Posterior vena cava (tissue), 2 donors: ENCODE measurements at regions of chr9 and their contacts with region 1.

Region 1: GRCh38 chr9:33721674-33722358 is 73.5 kb upstream of the PRSS3 start:
- DNase-seq: peak; percentile 96

Region 2: GRCh38 chr9:33623658-33624586 is 97.9 kb before region 1 on chr9:
- intact Hi-C with region 1: loop called (anchors 5 kb)
- DNase-seq: no peak

Region 3: DNA sequence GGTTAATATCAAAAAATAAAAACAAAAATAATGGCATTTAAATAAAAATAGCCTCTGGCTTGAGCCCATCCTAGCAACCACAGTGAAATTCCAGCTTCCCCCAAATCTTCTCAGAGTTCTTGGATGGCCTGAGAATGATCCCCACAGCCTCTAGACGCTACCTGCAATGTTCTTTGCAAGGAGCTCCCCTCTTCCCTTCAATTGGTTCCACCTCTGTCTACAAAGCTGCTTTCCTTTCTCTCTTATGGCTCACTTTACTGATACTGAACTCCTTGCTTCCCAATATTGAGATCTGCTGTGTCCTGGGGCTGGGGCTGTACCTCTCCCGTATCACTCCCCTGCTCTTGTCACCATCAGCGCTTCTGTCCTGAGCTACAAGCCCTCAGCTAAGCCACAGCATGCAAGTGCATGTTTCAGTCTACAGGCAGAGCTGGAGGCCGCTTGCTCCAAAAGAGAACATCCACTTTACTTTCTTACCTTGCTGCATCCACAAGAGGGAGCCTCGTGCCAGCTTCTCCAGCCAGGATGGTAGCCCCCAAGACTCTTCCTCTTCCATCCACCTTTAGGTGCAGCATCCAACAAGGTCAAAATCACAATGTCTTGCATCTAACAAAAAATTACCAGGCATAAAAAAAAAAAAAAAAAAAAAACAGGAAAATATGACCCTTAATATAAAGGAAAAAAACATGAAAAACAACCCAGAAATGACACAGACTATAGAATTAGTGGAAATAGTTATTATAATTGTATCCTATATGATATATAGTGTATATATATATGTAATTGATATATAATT is 16.2 kb after region 1 on chr9:
- intact Hi-C with region 1: no loop called
- DNase-seq: no peak